ENCODE measurements at regions of chr3 and their contacts with region 1.

Region 1: DNA sequence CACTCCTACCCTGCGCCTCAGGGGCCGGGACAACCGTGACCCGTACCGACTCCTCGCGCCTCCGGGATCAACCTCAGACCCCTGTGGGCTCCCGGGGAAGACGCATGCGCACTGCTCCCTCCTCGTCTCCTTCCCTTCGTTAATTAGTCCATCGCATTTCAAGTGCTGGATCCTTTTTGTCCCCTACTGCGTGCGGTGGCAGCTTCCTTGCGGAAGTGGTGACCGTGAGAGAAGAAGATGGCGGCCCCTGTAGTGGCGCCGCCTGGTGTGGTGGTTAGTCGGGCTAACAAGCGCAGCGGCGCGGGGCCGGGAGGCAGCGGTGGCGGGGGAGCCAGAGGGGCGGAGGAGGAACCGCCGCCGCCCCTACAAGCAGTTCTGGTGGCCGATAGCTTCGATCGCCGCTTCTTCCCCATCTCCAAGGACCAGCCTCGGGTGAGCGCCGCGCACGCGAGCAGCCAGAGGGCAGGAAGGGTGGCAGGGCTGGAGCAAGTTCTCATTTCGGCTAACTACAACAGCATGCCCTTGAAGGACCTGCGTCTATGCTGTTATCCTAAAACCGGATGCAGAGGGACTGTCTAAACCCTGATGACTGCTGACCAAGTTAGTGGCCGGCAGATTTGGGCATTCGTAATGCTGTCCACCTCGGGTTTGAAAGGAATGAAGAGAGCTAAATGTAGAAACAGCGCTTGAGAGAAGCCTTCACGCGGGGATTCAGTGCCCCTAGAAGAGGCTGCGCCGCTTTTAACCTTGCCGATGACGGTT is at the start of gene EIF2B5:
- DNase-seq: peak; percentile 92 to 95
- ATAC-seq: peak; percentile 93 to 95 (median 94)
- H3K4me3 ChIP-seq: peak within 1 kb of the TSS; percentile 96
- H3K27ac ChIP-seq: peak within 1 kb of the TSS; percentile 93
- H3K4me1 ChIP-seq: peaks cover 11% of the 10 kb centered on the region
- H3K27me3 ChIP-seq: no peaks in the 10 kb centered on the region
- CTCF ChIP-seq: peak; percentile 35
- total RNA-seq, gene EIF2B5: 44.0 to 55.1 (median 50.0) TPM

Region 2: DNA sequence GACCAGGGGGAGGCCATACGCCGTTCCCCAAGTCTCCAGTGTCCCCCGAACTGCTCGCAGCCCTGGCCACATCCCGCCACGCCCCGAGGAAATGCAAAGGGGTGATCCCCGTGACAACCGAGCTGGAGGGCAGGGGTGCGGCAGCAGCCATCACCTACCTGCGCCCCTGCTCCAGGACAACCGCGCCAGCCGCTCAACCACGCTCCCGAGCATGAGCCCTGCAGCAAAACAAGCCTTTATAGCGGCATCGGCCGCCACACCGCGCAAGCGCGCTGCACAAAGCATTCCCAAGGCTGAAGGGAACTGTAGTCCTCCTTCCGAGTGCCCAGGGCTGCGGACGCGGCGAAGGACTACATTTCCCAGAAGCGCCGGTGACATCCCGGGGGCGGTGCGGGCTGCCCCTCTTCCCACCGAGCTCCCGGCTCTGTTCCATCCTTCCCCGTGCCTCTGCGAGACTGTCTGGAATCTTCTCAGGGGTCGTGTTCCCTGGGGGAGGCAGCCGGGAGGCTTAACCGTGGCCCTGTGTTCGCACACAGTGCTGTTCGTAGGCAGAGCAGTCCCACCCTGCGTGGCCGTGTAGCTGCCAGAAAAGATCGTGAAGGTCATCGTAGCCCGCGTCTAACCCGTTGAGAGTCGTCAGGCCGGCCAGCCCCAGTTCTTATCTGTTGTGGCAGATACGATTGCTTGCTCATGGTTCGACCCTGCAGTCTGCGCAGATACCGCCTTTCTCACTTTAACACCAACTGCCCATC is 117.5 kb before region 1 on chr3 and contains the start of gene ABCC5:
- intact Hi-C with region 1: loop called in 1 of 2 experiments (anchors 5 kb)
- DNase-seq: peak; percentile 94 to 97
- ATAC-seq: peak; percentile 91 to 94 (median 94)
- H3K4me3 ChIP-seq: peak within 1 kb of the TSS; percentile 96
- H3K27ac ChIP-seq: peak within 1 kb of the TSS; percentile 89
- H3K4me1 ChIP-seq: peaks cover 25% of the 10 kb centered on the region
- H3K27me3 ChIP-seq: no peaks in the 10 kb centered on the region
- CTCF ChIP-seq: no peak
- total RNA-seq, gene ABCC5: 34.4 to 94.2 (median 55.6) TPM

Region 3: DNA sequence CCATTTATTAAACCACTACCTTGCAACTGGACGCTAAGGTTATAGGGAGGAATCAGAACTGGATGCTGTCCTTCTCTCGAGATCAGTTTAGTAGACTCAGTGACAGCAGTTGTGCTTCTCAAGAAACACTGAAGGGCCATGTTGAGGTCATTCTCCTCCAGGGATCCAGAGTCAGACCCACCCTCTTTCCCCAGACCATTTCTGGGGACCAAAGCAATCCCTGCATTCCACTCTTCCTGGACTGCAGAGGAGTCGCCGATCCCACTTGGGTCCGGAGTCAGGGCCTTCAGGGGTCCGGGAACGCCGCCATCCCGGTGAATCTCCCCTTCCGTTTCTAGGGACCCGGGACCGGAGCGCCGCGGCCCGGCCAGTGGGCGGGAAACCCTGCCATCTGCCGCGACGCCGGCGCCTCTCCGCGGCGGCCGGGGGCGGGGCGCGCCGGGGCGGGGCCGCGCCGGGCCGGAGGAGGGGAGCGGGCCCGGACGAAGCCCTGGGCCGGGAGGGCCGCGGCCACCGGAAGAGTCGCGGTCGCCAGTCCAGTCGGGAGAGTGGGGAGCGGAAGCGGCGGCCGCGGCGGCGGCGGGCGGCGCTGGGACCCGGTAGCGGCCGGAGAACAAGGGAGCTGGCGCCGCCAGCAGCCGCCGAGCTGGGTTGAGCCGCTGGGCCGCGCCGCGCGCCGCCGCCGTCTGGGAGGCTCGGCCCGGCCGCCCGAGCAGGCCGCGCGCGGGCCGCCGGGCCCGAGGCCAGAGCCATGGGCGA is 19.7 kb after region 1 on chr3 and contains the start of gene DVL3:
- intact Hi-C with region 1: loop called in 1 of 2 experiments (anchors 2 kb)
- DNase-seq: peak; percentile 80 to 90
- ATAC-seq: peak; percentile 84 to 91 (median 88)
- H3K4me3 ChIP-seq: peak within 1 kb of the TSS; percentile 84
- H3K27ac ChIP-seq: peak within 1 kb of the TSS; percentile 88
- H3K4me1 ChIP-seq: peaks cover 38% of the 10 kb centered on the region
- H3K27me3 ChIP-seq: no peaks in the 10 kb centered on the region
- CTCF ChIP-seq: no peak
- total RNA-seq, gene DVL3: 46.7 to 57.2 (median 47.7) TPM

Region 4: DNA sequence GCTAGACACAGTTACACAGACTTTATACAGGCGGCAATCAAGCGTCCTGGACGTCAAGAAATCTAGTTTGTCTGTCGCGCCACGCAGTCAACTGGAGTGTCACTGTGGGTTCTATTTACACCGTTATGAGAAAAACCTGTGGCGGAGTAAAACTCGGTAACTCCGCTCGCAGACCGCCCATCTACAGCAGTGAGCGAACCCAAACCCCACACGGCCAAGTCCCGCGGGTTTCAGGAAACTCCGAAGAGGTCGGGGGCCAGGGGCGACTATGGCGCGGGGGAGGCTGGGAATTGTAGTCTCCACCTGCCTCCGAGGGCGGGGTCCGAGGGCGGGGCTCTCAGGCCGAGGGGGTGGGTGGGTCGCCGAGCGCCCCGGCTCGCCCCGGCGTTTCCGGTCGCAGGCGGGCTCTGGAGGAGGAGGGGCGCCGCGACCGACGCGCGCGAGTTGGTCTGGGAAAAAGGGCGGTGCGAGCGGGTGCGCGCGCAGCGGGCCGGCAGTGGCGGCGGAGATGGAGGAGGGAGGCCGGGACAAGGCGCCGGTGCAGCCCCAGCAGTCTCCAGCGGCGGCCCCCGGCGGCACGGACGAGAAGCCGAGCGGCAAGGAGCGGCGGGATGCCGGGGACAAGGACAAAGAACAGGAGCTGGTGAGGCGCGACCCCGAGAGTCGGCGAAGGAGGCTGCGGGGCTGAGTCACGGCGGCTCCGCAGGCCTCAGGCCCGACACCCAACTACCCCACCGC is 163.6 kb after region 1 on chr3 and contains the start of gene PSMD2:
- intact Hi-C with region 1: loop called in 1 of 2 experiments (anchors 5 kb)
- DNase-seq: peak; percentile 98 to 99
- ATAC-seq: peak; percentile 98 to 99 (median 99)
- H3K4me3 ChIP-seq: peak within 1 kb of the TSS; percentile 97
- H3K27ac ChIP-seq: peak within 1 kb of the TSS; percentile 84
- H3K4me1 ChIP-seq: peaks cover 25% of the 10 kb centered on the region
- H3K27me3 ChIP-seq: no peaks in the 10 kb centered on the region
- CTCF ChIP-seq: no peak
- total RNA-seq, gene PSMD2: 338 to 440 (median 424) TPM